GM12878 (cell line): ENCODE measurements at regions of chr10 and their contacts with region 1.

Region 1: GRCh38 chr10:78047314-78047891 is 13.7 kb downstream of the RPS24 start:
- DNase-seq: no peak
- ATAC-seq: peak; percentile 81
- H3K4me3 ChIP-seq: no peak overlapping the region
- H3K27ac ChIP-seq: no peak overlapping the region
- H3K4me1 ChIP-seq: peaks cover 17% of the 10 kb centered on the region
- H3K27me3 ChIP-seq: no peaks in the 10 kb centered on the region
- CTCF ChIP-seq: peak; percentile 88 to 92 (median 91)
- EP300 ChIP-seq: no peak
- POLR2A ChIP-seq: no peak
- RAD21 ChIP-seq: peak; percentile 90

Region 2: DNA sequence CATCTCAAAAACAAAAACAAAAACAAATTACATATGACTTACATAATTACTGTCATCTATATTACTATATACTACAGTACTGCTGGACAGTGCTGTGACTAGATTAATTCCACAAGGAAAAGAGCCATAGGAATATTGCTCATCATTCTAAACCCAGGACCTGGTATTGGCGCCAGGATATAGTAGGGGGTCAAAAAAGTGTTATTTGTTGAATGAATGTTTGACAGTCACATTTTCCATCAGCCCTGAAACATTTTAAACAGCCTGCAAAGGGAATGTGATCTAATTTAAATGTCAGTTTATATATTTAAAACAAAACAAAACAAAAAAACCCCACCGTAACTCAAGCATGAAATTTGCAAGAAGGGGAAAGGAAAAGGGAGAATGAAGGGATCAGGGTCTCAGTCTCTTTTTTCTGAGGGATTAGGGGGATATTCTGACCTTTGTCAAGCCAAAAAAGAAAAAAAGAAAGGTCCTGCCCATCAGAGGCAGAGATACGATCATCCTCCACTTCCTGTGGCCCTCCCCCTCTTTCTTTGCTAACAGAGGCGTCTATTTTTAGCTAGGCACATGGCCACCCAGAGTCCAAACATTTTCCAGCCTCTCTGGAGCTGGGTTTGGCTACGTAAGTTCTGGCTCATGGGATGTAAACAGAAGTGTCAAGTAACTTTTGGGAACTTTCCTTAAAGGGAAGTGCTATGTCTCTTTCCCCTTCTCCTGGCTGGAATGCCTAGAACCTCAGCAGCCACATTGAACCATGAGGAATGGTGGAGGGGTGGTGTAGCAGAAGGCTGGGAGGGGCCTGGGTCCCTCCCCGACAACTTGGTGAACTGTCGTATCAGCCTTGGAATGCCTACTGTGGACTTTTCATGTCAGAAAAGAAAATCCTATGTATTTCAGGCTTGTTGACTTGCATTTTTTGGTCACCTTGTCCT is 76.3 kb before region 1 on chr10:
- CTCF ChIA-PET with region 1: no interaction called
- POLR2A ChIA-PET with region 1: no interaction called
- RAD21 ChIA-PET with region 1: no interaction called
- SMC1A ChIA-PET with region 1: no interaction called
- in situ Hi-C with region 1: no loop called
- intact Hi-C with region 1: no loop called
- DNase-seq: no peak
- ATAC-seq: peak; percentile 38; the same call in 2 of the 3 replicates
- H3K4me3 ChIP-seq: no peak overlapping the region
- H3K27ac ChIP-seq: peak overlapping the region; percentile 30
- H3K4me1 ChIP-seq: 0 out of 2 replicates have a peak, but pooled peaks cover 5% of the 10 kb centered on the region
- H3K27me3 ChIP-seq: no peaks in the 10 kb centered on the region
- CTCF ChIP-seq: no peak
- EP300 ChIP-seq: no peak
- POLR2A ChIP-seq: no peak
- RAD21 ChIP-seq: no peak

Region 3: GRCh38 chr10:78302989-78303854 is 255.8 kb after region 1 on chr10:
- CTCF ChIA-PET with region 1: interaction called, 18 read pairs
- POLR2A ChIA-PET with region 1: no interaction called
- RAD21 ChIA-PET with region 1: interaction called, 4 read pairs
- SMC1A ChIA-PET with region 1: interaction called, 3 read pairs
- in situ Hi-C with region 1: no loop called
- intact Hi-C with region 1: loop called (anchors 5 kb)
- DNase-seq: peak; percentile 73
- ATAC-seq: peak; percentile 95
- H3K4me3 ChIP-seq: peak overlapping the region; percentile 64
- H3K27ac ChIP-seq: peak overlapping the region; percentile 35
- H3K4me1 ChIP-seq: peaks cover 15% of the 10 kb centered on the region
- H3K27me3 ChIP-seq: peaks cover 0 to 5% of the 10 kb centered on the region in 2 experiments; a peak in 2 of 4 replicates
- CTCF ChIP-seq: peak; percentile 72 to 79 (median 78)
- EP300 ChIP-seq: no peak; a peak in 1 of 4 replicates
- POLR2A ChIP-seq: peak; percentile 76
- RAD21 ChIP-seq: peak; percentile 32; the same call in 1 of the 2 replicates

Region 4: GRCh38 chr10:78520737-78521430 is 473.5 kb after region 1 on chr10:
- CTCF ChIA-PET with region 1: no interaction called
- POLR2A ChIA-PET with region 1: no interaction called
- RAD21 ChIA-PET with region 1: no interaction called
- SMC1A ChIA-PET with region 1: no interaction called
- in situ Hi-C with region 1: no loop called
- intact Hi-C with region 1: loop called (anchors 2 kb)
- DNase-seq: no peak
- ATAC-seq: no peak
- H3K4me3 ChIP-seq: no peak overlapping the region
- H3K27ac ChIP-seq: no peak overlapping the region
- H3K4me1 ChIP-seq: no peaks in the 10 kb centered on the region
- H3K27me3 ChIP-seq: no peaks in the 10 kb centered on the region
- CTCF ChIP-seq: peak in 1 of 3 experiments; percentile 15; a peak in 2 of 6 replicates
- EP300 ChIP-seq: no peak
- POLR2A ChIP-seq: no peak
- RAD21 ChIP-seq: no peak

Region 5: GRCh38 chr10:78657163-78657861 is 609.9 kb after region 1 on chr10:
- CTCF ChIA-PET with region 1: interaction called, 36 read pairs
- POLR2A ChIA-PET with region 1: no interaction called
- RAD21 ChIA-PET with region 1: interaction called, 4 read pairs
- SMC1A ChIA-PET with region 1: interaction called, 6 read pairs
- in situ Hi-C with region 1: no loop called
- intact Hi-C with region 1: loop called (anchors 5 kb)
- DNase-seq: no peak
- ATAC-seq: peak; percentile 97
- H3K4me3 ChIP-seq: no peak overlapping the region
- H3K27ac ChIP-seq: no peak overlapping the region
- H3K4me1 ChIP-seq: peaks cover 8% of the 10 kb centered on the region
- H3K27me3 ChIP-seq: no peaks in the 10 kb centered on the region
- CTCF ChIP-seq: peak; percentile 75 to 88 (median 79)
- EP300 ChIP-seq: no peak
- POLR2A ChIP-seq: no peak
- RAD21 ChIP-seq: peak; percentile 60